ENCODE measurements at regions of chr10 and their contacts with region 1.

Region 1: DNA sequence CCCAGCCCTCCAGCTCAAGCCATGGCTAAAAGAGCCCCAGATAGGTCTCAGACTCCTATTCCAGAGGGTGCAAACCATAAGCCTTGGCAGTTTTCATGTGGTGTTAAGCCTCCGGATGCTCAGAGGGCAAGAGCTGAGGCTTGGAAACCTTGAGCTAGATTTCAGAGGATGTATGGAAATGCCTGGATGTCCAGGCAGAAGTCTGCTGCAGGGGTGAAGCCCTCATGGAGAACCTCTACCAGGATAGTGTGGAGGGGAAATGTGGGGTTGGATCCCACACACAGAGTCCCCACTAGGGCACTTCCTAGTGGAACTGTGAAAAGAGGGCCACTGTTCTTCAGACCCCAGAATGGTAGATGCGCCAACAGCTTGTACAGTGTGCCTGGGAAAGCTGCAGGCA is 13.2 kb upstream of the HPSE2 start:
- DNase-seq: no peak
- H3K4me3 ChIP-seq: no peak overlapping the region
- H3K27ac ChIP-seq: no peak overlapping the region
- H3K4me1 ChIP-seq: no peaks in the 10 kb centered on the region
- H3K27me3 ChIP-seq: no peaks in the 10 kb centered on the region
- CTCF ChIP-seq: no peak
- EP300 ChIP-seq: no peak
- RAD21 ChIP-seq: no peak

Region 2: GRCh38 chr10:99234041-99234790 is 14.6 kb before region 1 on chr10:
- CTCF ChIA-PET with region 1: interaction called, 12 read pairs
- POLR2A ChIA-PET with region 1: no interaction called
- DNase-seq: peak; percentile 63
- H3K4me3 ChIP-seq: peak overlapping the region; percentile 26 to 57
- H3K27ac ChIP-seq: no peak overlapping the region
- H3K4me1 ChIP-seq: peaks cover 0 to 11% of the 10 kb centered on the region in 2 experiments; a peak in 1 of 4 replicates
- H3K27me3 ChIP-seq: peaks cover 57% of the 10 kb centered on the region
- CTCF ChIP-seq: no peak
- EP300 ChIP-seq: no peak
- RAD21 ChIP-seq: no peak

Region 3: DNA sequence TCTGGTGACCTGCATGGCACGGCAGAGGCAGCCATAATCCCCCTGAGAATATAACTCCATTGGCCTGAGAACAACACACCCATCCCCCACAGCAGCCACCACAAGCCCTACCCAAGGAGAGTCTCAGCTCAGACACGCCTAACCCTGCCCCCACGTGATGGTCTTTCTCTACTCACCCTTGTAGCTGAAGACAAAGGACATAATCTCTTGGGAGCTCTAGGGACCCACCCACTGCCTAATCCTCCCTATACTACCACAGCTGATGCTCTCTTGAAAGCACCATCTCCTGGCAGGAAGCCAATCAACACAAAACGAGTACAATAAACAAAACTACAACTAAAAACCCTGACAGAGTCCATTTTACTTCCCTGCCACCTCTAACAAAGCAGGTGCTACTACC is 17.6 kb after region 1 on chr10:
- CTCF ChIA-PET with region 1: no interaction called
- POLR2A ChIA-PET with region 1: no interaction called
- DNase-seq: no peak
- H3K4me3 ChIP-seq: no peak overlapping the region
- H3K27ac ChIP-seq: no peak overlapping the region
- H3K4me1 ChIP-seq: no peaks in the 10 kb centered on the region; a peak in 1 of 4 replicates
- H3K27me3 ChIP-seq: no peaks in the 10 kb centered on the region
- CTCF ChIP-seq: no peak
- EP300 ChIP-seq: no peak
- RAD21 ChIP-seq: no peak

Region 4: GRCh38 chr10:99276848-99277486 is 28.1 kb after region 1 on chr10:
- CTCF ChIA-PET with region 1: interaction called, 10 read pairs
- POLR2A ChIA-PET with region 1: no interaction called
- DNase-seq: peak; percentile 18
- H3K4me3 ChIP-seq: no peak overlapping the region
- H3K27ac ChIP-seq: no peak overlapping the region
- H3K4me1 ChIP-seq: no peaks in the 10 kb centered on the region
- H3K27me3 ChIP-seq: no peaks in the 10 kb centered on the region
- CTCF ChIP-seq: peak; percentile 45
- EP300 ChIP-seq: no peak
- RAD21 ChIP-seq: peak; percentile 64

Measured in SK-N-SH (cell line).